Sigmoid colon (tissue), 7 donors: ENCODE measurements at regions of chr6 and their contacts with region 1.

Region 1: GRCh38 chr6:33744001-33744848 is 2.5 kb downstream of the IP6K3 start:
- DNase-seq: peak; percentile 86
- H3K4me3 ChIP-seq: peak overlapping the region in 3 of 4 donors; percentile 45 to 49 (median 46)
- H3K27ac ChIP-seq: peak overlapping the region in 3 of 4 donors; percentile 90 to 93 (median 90)
- H3K4me1 ChIP-seq: peaks cover 0 to 63% (median 43%) of the 10 kb centered on the region in 4 donors
- H3K27me3 ChIP-seq: no peaks in the 10 kb centered on the region
- CTCF ChIP-seq: peak; percentile 92 to 96 (median 95)
- EP300 ChIP-seq: no peak
- POLR2A ChIP-seq: no peak

Region 2: GRCh38 chr6:33717934-33718455 is 26.2 kb before region 1 on chr6:
- intact Hi-C with region 1: loop called (anchors 2 kb)
- DNase-seq: peak; percentile 79
- H3K4me3 ChIP-seq: no peak overlapping the region
- H3K27ac ChIP-seq: peak overlapping the region in 3 of 4 donors; percentile 67 to 74 (median 73)
- H3K4me1 ChIP-seq: peaks cover 0 to 28% (median 18%) of the 10 kb centered on the region in 4 donors
- H3K27me3 ChIP-seq: no peaks in the 10 kb centered on the region
- CTCF ChIP-seq: no peak
- EP300 ChIP-seq: no peak
- POLR2A ChIP-seq: no peak